CD8-positive, alpha-beta T cell (primary cell): ENCODE measurements at regions of chr1 and their contacts with region 1.

Region 1: DNA sequence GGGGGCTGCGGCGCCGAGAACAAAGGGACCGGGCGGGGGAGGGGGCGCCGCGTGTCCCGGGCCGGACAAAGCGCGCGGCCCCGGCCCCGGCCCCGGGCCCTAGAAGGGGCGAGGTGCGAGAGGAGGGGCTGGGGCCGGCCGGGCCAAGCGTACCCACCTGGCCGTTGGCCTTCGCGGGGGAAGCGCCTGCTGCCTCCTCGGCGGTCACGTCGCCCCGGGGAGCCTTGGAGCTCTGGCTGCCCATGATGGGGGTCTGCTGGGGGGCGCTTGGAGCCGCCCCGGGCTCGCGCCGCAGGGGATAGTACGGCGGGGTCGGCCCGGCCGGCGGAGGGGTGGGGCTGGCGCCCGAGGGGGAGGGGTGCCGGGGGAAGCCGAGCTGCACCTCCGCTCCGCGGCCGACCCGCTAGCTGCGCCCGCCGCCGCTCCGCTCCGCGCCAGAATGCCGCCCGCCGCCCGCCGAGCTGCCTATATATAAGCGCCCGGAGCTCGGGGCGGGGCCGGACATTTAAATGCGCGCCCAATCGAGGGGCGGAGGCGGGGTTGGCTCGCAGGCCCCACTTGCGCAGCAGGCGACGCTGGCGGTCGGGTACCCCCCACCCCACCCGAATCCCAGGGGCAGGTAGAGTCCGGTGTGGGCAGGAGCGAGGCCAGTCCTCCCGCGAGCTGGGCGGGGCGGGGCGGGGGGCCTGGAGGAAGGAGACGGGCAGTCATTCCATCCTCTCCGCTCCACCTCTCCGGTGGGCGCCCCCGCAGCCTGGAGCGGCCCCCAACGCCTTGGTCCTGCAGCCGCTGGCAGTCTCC is at the start of gene MARCKSL1:
- DNase-seq: peak; percentile 75 to 94 (median 86)
- ATAC-seq: peak; percentile 70
- H3K4me3 ChIP-seq: peak within 1 kb of the TSS; percentile 45 to 50
- H3K4me3 Mint-ChIP-seq: peak within 1 kb of the TSS; percentile 83
- H3K27ac ChIP-seq: peak within 1 kb of the TSS in 1 of 2 experiments; percentile 22
- H3K27ac Mint-ChIP-seq: peak within 1 kb of the TSS; percentile 77
- H3K4me1 ChIP-seq: peaks cover 27% of the 10 kb centered on the region
- H3K4me1 Mint-ChIP-seq: peaks cover 35% of the 10 kb centered on the region
- H3K27me3 ChIP-seq: no peaks in the 10 kb centered on the region
- H3K27me3 Mint-ChIP-seq: no peaks in the 10 kb centered on the region
- CTCF ChIP-seq: no peak
- total RNA-seq, gene MARCKSL1: 30.5 to 30.7 TPM

Region 2: DNA sequence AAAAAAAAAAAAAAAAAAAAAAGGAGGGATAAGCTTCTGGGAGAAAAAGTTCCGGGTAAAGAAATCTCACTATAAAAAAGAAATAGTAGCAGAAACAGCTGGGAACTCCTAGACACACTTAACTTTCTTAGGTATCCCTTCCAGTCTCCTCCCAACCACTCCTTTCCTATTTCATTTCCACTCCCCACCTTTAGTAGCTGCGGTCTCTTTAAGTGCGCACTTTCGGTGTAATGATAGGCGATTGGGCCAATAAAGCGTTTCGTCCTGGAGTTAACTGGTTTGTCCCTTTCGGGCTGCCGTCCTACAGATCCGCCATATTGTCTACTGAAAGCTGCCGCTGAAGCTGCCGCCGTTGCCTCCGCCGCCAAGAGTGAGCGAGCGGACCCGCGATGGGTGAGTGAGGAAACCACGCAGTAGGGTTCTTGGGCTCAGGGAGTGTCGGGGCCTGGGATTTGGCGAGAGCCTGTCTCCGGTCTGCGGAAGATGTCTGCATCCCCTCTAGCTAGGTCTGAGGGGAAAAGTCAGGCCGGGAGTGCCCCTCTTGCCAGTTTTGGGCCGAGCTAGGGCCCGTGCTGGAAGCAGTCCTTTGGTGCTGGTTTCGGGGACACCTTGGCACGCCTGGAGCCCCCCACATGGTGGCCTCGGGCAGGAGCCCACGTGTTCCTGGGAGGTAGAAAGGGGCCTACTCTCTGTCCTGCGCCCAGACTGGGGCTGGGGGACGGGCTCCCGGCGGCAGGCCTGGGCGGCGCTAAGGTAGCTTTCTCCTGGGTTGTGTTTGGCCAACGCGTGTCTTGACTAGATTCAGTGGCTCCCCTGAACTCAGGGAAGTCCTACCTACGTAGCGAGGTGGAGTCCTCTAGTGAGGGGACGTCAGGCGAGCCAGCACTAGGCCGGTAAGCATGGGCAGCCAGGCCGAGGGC is 228.0 kb before region 1 on chr1 and contains the start of gene KPNA6:
- CTCF ChIA-PET with region 1: no interaction called
- POLR2A ChIA-PET with region 1: interaction called, 5 read pairs
- intact Hi-C with region 1: loop called in 1 of 2 experiments (anchors 1 kb)
- DNase-seq: peak; percentile 83 to 98 (median 90)
- ATAC-seq: peak; percentile 89
- H3K4me3 ChIP-seq: peak within 1 kb of the TSS; percentile 87 to 95
- H3K4me3 Mint-ChIP-seq: peak within 1 kb of the TSS; percentile 98
- H3K27ac ChIP-seq: peak within 1 kb of the TSS; percentile 84 to 93
- H3K27ac Mint-ChIP-seq: peak within 1 kb of the TSS; percentile 98
- H3K4me1 ChIP-seq: peaks cover 45% of the 10 kb centered on the region
- H3K4me1 Mint-ChIP-seq: peaks cover 50% of the 10 kb centered on the region
- H3K27me3 ChIP-seq: no peaks in the 10 kb centered on the region
- H3K27me3 Mint-ChIP-seq: no peaks in the 10 kb centered on the region
- CTCF ChIP-seq: no peak
- total RNA-seq, gene KPNA6: 51.7 to 58.7 TPM

Region 3: GRCh38 chr1:32247983-32248889 is 87.8 kb before region 1 on chr1:
- CTCF ChIA-PET with region 1: interaction called, 21 read pairs
- POLR2A ChIA-PET with region 1: interaction called, 51 read pairs
- intact Hi-C with region 1: no loop called
- DNase-seq: peak; percentile 51 to 84 (median 76)
- ATAC-seq: peak; percentile 5
- H3K4me3 ChIP-seq: peak overlapping the region; percentile 21 to 28
- H3K4me3 Mint-ChIP-seq: peak overlapping the region; percentile 66
- H3K27ac ChIP-seq: peak overlapping the region; percentile 40 to 93
- H3K27ac Mint-ChIP-seq: peak overlapping the region; percentile 99
- H3K4me1 ChIP-seq: peaks cover 42% of the 10 kb centered on the region
- H3K4me1 Mint-ChIP-seq: peaks cover 44% of the 10 kb centered on the region
- H3K27me3 ChIP-seq: no peaks in the 10 kb centered on the region
- H3K27me3 Mint-ChIP-seq: no peaks in the 10 kb centered on the region
- CTCF ChIP-seq: peak; percentile 86

Region 4: DNA sequence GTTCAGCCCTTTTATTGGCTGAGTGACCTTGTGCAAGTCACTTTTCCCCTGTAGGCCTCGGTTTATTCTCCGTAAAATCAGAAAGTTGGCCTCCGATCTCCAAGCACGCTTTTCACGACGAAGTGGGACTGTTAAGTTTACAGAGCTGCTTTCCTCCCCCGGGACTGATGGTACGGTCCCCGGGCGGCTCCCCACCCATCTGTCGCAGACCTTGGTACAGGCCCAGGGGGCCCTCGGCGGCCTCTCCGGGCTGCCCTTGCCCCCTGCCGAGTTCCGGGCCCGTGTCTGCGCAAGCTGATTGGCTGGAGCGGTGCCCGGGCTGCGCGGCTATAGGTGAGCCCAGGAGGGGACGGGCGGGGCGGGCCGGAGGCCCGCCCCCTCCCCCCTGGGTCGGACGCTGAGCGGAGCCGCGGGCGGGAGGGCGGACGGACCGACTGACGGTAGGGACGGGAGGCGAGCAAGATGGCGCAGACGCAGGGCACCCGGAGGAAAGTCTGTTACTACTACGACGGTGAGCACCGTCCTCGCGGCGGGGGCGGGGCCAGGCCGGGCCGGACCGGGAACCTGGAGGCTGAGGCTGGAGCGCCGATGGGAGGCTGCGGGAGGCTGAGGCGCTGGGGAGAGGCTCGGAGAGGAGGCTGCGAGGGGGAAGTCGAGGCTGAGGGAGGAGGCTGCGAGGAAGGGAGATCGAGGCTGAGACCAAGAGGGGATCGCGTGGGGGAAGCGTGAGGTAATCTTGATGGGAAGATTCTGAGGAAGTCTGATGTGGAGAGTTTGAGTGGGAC is 44.1 kb before region 1 on chr1 and contains the start of gene HDAC1:
- CTCF ChIA-PET with region 1: interaction called, 6 read pairs
- POLR2A ChIA-PET with region 1: interaction called, 29 read pairs
- intact Hi-C with region 1: loop called in 1 of 2 experiments (anchors 1 kb)
- DNase-seq: peak; percentile 94 to 98 (median 97)
- ATAC-seq: peak; percentile 93
- H3K4me3 ChIP-seq: peak within 1 kb of the TSS; percentile 84 to 92
- H3K4me3 Mint-ChIP-seq: peak within 1 kb of the TSS; percentile 100
- H3K27ac ChIP-seq: peak within 1 kb of the TSS; percentile 68 to 69
- H3K27ac Mint-ChIP-seq: peak within 1 kb of the TSS; percentile 98
- H3K4me1 ChIP-seq: peaks cover 45% of the 10 kb centered on the region
- H3K4me1 Mint-ChIP-seq: peaks cover 52% of the 10 kb centered on the region
- H3K27me3 ChIP-seq: no peaks in the 10 kb centered on the region
- H3K27me3 Mint-ChIP-seq: no peaks in the 10 kb centered on the region
- CTCF ChIP-seq: no peak
- total RNA-seq, gene HDAC1: 57.8 to 61.4 TPM

Region 5: DNA sequence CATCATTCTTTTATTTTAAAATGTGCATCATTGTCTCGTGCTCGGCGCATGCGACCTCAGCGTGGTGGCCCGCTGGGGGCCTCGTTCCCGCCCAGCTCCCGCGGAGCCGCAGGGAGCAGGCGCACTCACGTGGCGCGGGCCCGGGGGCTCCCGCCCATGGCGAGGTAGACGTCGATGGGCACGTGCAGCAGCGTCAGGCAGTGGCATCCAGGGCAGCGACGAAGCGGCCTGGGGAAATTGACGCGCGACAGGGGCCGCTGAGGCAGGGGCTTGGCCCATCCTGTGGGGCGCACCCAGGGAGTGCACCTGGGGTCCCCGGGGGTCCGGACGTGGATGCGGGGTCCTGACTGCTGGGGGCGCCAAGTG is 25.3 kb after region 1 on chr1:
- CTCF ChIA-PET with region 1: no interaction called
- POLR2A ChIA-PET with region 1: interaction called, 14 read pairs
- intact Hi-C with region 1: no loop called
- DNase-seq: peak in 1 of 9 experiments; percentile 26
- ATAC-seq: no peak
- H3K4me3 ChIP-seq: no peak overlapping the region
- H3K4me3 Mint-ChIP-seq: peak overlapping the region; percentile 82
- H3K27ac ChIP-seq: no peak overlapping the region
- H3K27ac Mint-ChIP-seq: peak overlapping the region; percentile 46
- H3K4me1 ChIP-seq: peaks cover 21% of the 10 kb centered on the region
- H3K4me1 Mint-ChIP-seq: peaks cover 22% of the 10 kb centered on the region
- H3K27me3 ChIP-seq: no peaks in the 10 kb centered on the region
- H3K27me3 Mint-ChIP-seq: no peaks in the 10 kb centered on the region
- CTCF ChIP-seq: no peak

Region 6: GRCh38 chr1:32413507-32414185 is 77.7 kb after region 1 on chr1:
- CTCF ChIA-PET with region 1: interaction called, 5 read pairs
- POLR2A ChIA-PET with region 1: no interaction called
- intact Hi-C with region 1: loop called (anchors 1 kb)
- DNase-seq: peak; percentile 32 to 88 (median 75)
- ATAC-seq: peak; percentile 80
- H3K4me3 ChIP-seq: no peak overlapping the region
- H3K4me3 Mint-ChIP-seq: no peak overlapping the region
- H3K27ac ChIP-seq: no peak overlapping the region
- H3K27ac Mint-ChIP-seq: no peak overlapping the region
- H3K4me1 ChIP-seq: no peaks in the 10 kb centered on the region
- H3K4me1 Mint-ChIP-seq: peaks cover 3% of the 10 kb centered on the region
- H3K27me3 ChIP-seq: no peaks in the 10 kb centered on the region
- H3K27me3 Mint-ChIP-seq: peaks cover 10% of the 10 kb centered on the region
- CTCF ChIP-seq: peak; percentile 89